Pancreas (tissue), 10 donors: ENCODE measurements at regions of chr16 and their contacts with region 1.

Region 1: GRCh38 chr16:70534971-70535370 is 11.4 kb downstream of the SF3B3 start:
- DNase-seq: no peak
- ATAC-seq: no peak
- H3K4me3 ChIP-seq: no peak overlapping the region
- H3K27ac ChIP-seq: no peak overlapping the region
- H3K4me1 ChIP-seq: no peaks in the 10 kb centered on the region
- H3K27me3 ChIP-seq: no peaks in the 10 kb centered on the region
- CTCF ChIP-seq: no peak

Region 2: DNA sequence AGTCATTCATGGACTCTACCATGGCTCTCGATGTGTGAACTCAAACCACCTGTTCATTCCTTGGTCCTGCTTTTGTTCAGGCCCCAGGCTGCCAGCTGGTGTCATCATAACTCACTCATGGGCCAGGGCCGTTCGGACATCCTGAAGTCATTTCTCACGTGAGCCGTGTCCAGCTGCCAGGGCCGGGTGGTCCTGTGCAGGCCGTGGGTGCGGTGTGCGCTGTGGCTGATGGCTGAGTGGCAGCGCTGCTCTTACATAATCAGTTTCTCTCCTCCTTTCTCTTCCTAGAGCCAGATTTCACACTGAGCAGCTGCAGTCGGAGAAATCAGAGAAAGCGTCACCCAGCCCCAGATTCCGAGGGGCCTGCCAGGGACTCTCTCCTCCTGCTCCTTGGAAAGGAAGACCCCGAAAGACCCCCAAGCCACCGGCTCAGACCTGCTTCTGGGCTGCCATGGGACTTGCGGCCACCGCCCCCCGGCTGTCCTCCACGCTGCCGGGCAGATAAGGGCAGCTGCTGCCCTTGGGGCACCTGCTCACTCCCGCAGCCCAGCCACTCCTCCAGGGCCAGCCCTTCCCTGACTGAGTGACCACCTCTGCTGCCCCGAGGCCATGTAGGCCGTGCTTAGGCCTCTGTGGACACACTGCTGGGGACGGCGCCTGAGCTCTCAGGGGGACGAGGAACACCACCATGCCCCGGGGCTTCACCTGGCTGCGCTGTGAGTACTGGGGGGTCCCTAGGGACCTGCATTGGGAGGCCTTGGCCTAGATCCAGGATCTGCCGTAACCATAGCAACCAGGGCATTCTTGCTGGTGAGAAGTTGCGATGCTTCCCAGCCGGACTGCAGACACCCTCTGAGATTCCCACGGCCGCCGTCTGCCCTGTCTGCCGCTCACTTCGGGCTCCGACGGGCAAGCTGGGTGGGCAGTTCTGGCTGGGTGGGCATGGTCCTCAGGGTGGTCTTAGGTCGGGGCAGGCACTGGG is 111.6 kb after region 1 on chr16 and contains the start of gene IL34:
- intact Hi-C with region 1: loop called in 2 of 3 experiments (anchors 10 kb)
- DNase-seq: peak in 3 of 6 donors; percentile 25 to 69 (median 58)
- ATAC-seq: peak; percentile 44 to 67 (median 50)
- H3K4me3 ChIP-seq: no peak within 1 kb of the TSS
- H3K27ac ChIP-seq: no peak within 1 kb of the TSS
- H3K4me1 ChIP-seq: no peaks in the 10 kb centered on the region
- H3K27me3 ChIP-seq: no peaks in the 10 kb centered on the region
- CTCF ChIP-seq: no peak
- total RNA-seq, gene IL34: 0.51 to 3.9 (median 1.2) TPM

Region 3: GRCh38 chr16:70653809-70654771 is 119.1 kb after region 1 on chr16:
- intact Hi-C with region 1: loop called in 2 of 3 experiments (anchors 10 kb)
- DNase-seq: peak; percentile 57 to 90 (median 72)
- ATAC-seq: peak; percentile 86 to 98 (median 94)
- H3K4me3 ChIP-seq: peak overlapping the region in 1 of 4 donors; percentile 31
- H3K27ac ChIP-seq: no peak overlapping the region
- H3K4me1 ChIP-seq: no peaks in the 10 kb centered on the region
- H3K27me3 ChIP-seq: no peaks in the 10 kb centered on the region
- CTCF ChIP-seq: peak; percentile 80 to 89 (median 86)